OCI-LY7 (cell line): ENCODE measurements at regions of chr3 and their contacts with region 1.

Region 1: DNA sequence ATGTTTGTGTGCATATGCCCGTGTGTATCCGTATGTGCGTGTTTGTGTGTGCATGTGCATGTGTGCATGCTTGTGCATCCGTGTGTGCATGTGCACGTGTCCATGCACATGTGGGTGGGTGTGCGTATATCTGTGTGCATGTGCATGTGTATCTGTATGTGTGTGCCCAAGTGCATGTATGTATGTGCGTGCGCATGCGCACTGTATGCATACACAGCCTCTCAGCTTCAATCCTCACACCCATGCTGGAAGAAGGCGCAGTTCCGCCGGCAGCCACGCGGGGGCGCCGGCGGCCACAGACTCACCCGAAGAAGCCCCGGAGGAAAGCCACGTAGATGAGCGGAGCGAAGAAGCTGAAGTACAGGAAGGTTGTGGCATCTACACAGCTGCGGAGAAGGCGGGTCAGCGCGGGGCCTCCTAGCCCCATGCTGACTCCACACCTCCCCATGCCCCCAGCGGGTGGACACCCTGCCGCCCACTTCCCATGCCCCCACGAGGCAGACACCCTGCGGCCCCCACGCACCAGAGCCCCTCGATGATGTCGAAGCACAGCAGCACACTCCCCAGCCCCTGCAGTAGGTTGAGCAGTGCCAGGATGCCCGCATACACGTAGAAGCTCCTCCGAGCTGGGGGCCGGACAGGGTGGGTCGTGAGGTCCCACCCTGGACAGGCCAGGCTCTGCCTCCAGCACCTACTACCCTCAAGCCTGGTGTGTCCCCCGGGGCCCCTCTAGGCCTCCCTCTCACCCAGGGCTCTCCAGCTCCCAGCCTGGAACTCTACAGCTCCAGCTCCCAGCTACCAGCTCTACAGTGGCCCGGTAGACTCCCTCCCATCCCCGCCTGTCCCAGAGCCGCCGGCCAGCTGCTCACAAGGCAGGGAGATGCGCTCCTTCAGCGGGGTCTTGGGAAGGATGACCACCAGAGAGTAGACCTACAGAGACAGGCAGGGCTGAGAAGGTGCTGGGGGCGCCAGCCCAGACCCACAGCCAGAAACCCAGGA is 15.4 kb downstream of the TPRA1 start:
- DNase-seq: peak; percentile 89
- H3K4me3 ChIP-seq: no peak overlapping the region
- H3K27ac ChIP-seq: no peak overlapping the region
- H3K4me1 ChIP-seq: no peaks in the 10 kb centered on the region
- CTCF ChIP-seq: peak; percentile 94

Region 2: DNA sequence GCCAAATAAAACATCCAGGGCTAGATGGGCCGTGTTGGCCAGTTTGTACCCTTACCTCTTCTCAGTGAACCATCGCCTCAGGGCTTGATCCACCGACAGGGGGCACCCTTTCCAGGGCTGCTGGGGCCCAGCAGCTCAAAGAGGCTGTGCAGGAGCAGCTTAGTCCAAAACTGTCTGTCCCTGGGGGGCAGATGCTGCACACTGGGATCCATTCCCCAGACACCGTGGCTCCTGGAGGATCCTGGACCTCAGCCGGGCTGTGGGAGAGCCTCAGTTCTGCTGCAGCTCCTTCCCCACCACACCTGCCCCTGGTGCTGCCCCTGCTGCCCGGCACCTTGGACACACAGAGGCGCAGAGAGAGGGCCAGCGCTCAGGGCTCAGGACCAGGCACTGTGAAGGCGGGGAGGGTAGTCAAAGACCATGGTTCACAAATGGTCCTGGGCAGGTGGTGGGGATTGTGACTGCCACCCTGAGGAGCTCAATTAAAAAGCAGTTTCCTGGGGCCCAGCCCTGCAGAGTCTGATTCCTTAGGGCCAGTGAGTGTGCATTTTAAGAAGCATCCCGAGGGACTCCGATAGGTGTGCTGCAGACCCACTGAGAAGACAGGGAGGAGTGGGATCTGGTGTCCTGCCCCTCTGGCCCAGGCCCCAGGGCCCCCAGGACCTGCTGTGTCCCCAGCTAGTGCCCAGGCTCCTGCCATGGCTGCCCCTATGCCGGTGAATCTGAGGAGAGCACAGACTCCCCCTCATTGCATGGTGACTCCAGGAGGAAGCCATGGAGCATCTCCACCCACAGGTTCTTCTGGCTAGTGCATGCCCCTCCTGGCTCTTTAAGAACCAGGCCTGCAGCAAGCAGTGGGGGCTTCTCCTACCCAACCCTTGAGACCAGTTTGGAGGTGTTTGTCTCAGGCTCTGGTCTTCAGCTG is 200.8 kb before region 1 on chr3:
- CTCF ChIA-PET with region 1: no interaction called
- POLR2A ChIA-PET with region 1: no interaction called
- intact Hi-C with region 1: no loop called
- DNase-seq: peak; percentile 18
- H3K4me3 ChIP-seq: no peak overlapping the region
- H3K27ac ChIP-seq: no peak overlapping the region
- H3K4me1 ChIP-seq: no peaks in the 10 kb centered on the region
- CTCF ChIP-seq: peak; percentile 73

Region 3: DNA sequence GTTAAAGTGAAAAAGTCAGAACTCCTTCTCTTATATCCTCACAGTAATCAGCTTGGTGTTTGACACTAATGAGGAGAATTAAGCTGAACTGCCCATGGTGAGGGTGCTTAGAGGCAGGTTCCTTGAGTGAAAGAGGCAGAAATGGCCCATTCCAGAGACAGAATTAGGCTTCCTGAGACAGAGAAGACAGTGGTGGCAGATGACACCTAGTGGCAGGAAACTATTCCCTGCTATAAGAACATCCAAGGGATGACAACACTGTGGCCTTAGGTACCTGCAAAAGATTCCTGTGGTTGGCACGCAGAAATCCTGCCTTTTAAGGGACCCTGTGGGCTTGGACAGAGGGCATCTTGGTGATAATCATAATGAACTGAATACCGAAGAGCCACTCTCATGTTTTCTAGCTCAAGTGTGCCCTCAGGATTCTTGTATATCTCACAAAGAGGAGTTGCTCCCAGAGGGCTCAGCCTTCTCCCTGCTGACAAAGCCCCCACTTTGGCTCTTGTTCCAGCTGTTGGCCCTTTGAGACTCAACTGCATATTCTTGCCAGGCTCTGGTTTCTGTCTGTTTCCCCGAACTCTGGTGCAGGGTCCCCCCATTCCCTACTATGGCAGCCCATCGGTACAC is 395.9 kb after region 1 on chr3:
- CTCF ChIA-PET with region 1: no interaction called
- POLR2A ChIA-PET with region 1: no interaction called
- intact Hi-C with region 1: loop called (anchors 5 kb)
- DNase-seq: peak; percentile 54
- H3K4me3 ChIP-seq: no peak overlapping the region
- H3K27ac ChIP-seq: no peak overlapping the region
- H3K4me1 ChIP-seq: no peaks in the 10 kb centered on the region
- CTCF ChIP-seq: peak; percentile 81

Region 4: DNA sequence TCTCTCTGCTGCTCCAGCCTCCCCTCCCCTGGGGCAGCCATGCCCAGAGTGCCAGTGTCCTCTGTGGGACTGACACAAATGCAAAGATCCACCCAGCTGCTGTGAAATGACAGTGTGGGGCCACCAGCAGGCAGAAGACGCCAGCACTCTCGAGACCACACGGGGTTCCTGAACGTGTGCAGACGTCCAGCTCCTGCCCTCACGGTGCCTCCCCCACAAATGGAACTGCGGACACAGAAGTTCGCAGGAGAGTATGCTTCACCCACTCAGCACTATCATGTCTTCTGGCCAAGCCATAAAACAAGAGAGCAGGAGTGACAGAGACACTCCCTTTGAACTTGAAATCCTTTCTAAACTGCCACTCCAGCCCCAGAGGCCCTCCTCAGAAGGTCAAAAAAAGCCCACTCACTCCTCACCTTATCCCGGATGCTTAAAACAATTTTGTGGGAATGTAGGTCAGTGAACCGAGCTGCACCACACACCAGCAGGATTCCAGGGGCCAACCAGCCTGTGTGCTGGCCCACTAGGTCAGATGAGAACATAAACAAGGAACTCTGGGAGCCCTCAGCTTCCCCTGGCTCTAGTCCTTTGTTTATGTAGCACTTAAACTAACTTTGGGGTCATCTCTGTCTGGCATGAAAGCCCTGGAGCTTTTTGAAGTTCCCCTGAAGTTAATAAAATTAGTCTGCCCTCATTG is 779.0 kb after region 1 on chr3:
- CTCF ChIA-PET with region 1: no interaction called
- POLR2A ChIA-PET with region 1: no interaction called
- intact Hi-C with region 1: no loop called
- DNase-seq: no peak
- H3K4me3 ChIP-seq: no peak overlapping the region
- H3K27ac ChIP-seq: no peak overlapping the region
- H3K4me1 ChIP-seq: peaks cover 4% of the 10 kb centered on the region
- CTCF ChIP-seq: no peak